Transverse colon (tissue), 4 donors: ENCODE measurements at regions of chr2 and their contacts with region 1.

Region 1: DNA sequence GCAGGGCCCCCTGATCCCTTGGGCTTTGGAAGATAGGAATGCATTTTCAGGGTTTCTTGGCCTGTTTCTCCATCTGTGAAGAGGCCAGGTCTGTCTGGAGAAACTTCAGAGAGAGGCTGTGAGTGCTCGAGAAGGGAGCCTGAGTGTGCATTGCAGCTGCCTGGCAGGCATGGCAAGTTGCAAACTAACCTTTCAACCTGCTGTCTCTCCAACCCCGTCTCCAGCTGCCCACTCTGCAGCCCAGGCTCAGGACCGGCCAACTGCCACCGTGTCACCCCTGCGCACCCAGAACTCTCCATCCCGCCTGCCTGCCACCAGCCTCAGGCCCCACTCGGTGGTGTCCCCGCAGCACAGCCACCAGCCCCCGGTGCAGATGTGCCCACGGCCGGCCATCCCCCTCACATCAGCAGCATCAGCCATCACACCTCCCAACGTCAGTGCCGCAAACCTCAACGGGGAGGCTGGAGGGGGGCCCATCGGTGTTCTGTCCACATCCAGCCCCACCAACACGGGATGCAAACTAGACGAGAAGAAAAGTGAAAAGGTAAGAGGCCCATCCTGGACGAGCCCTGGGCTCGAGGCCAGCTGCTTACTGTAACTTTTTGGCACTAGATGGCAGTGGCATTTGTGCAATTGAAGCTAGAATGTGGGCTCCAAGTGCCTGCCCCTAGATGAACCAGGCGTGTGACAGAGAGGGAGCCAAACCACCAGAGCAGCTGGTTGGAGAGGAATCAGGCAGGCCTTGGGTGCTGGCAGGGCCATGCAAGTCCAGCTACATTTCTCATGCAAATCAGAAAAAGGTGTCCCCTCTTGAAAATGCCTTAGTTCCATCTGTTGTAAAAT is 164.6 kb downstream of the SEPTIN10 start:
- DNase-seq: peak; percentile 24
- H3K4me3 ChIP-seq: no peak overlapping the region
- H3K27ac ChIP-seq: no peak overlapping the region
- H3K4me1 ChIP-seq: peaks cover 0 to 11% (median 2%) of the 10 kb centered on the region in 4 donors
- H3K27me3 ChIP-seq: no peaks in the 10 kb centered on the region
- CTCF ChIP-seq: peak in 2 of 5 experiments; percentile 14 to 16
- EP300 ChIP-seq: no peak
- POLR2A ChIP-seq: no peak

Region 2: GRCh38 chr2:108607706-108608301 is 841.4 kb before region 1 on chr2:
- in situ Hi-C with region 1: no loop called
- intact Hi-C with region 1: no loop called
- DNase-seq: no peak
- H3K4me3 ChIP-seq: no peak overlapping the region
- H3K27ac ChIP-seq: no peak overlapping the region
- H3K4me1 ChIP-seq: peaks cover 8 to 55% (median 14%) of the 10 kb centered on the region in 4 donors
- H3K27me3 ChIP-seq: no peaks in the 10 kb centered on the region
- CTCF ChIP-seq: peak; percentile 51 to 72 (median 54)
- EP300 ChIP-seq: no peak
- POLR2A ChIP-seq: no peak

Region 3: DNA sequence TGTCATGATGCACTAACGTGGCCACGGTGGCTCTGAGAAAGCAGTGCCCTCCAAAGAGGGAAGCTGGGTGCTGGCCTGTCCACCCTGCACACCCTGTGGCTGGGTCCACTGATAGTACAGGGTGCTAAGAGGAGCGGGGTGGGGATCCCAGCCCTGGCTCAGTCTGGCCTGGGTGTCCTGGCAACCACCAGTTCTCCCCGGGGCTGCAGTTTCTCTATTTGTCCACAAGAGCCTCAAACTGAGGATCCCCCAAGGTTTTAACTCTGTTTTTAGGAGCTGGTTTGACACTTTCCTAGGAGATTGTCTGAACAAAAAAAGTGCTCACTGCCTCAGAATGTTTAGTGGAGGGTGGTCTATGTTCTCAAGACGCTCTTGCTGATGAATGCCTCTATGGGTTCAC is 489.2 kb before region 1 on chr2:
- in situ Hi-C with region 1: no loop called
- intact Hi-C with region 1: no loop called
- DNase-seq: no peak
- H3K4me3 ChIP-seq: no peak overlapping the region
- H3K27ac ChIP-seq: no peak overlapping the region
- H3K4me1 ChIP-seq: peaks cover 0 to 26% (median 12%) of the 10 kb centered on the region in 4 donors
- H3K27me3 ChIP-seq: no peaks in the 10 kb centered on the region
- CTCF ChIP-seq: peak in 1 of 5 experiments; percentile 14
- EP300 ChIP-seq: no peak
- POLR2A ChIP-seq: no peak

Region 4: GRCh38 chr2:109435901-109436598 is 13.1 kb before region 1 on chr2:
- in situ Hi-C with region 1: no loop called
- intact Hi-C with region 1: loop called (anchors 1 kb)
- DNase-seq: no peak
- H3K4me3 ChIP-seq: no peak overlapping the region
- H3K27ac ChIP-seq: peak overlapping the region; percentile 11 to 60 (median 38)
- H3K4me1 ChIP-seq: peaks cover 0 to 5% (median 0%) of the 10 kb centered on the region in 4 donors
- H3K27me3 ChIP-seq: no peaks in the 10 kb centered on the region
- CTCF ChIP-seq: no peak
- EP300 ChIP-seq: peak; percentile 51
- POLR2A ChIP-seq: no peak